ENCODE measurements at regions of chr6 and their contacts with region 1.

Region 1: DNA sequence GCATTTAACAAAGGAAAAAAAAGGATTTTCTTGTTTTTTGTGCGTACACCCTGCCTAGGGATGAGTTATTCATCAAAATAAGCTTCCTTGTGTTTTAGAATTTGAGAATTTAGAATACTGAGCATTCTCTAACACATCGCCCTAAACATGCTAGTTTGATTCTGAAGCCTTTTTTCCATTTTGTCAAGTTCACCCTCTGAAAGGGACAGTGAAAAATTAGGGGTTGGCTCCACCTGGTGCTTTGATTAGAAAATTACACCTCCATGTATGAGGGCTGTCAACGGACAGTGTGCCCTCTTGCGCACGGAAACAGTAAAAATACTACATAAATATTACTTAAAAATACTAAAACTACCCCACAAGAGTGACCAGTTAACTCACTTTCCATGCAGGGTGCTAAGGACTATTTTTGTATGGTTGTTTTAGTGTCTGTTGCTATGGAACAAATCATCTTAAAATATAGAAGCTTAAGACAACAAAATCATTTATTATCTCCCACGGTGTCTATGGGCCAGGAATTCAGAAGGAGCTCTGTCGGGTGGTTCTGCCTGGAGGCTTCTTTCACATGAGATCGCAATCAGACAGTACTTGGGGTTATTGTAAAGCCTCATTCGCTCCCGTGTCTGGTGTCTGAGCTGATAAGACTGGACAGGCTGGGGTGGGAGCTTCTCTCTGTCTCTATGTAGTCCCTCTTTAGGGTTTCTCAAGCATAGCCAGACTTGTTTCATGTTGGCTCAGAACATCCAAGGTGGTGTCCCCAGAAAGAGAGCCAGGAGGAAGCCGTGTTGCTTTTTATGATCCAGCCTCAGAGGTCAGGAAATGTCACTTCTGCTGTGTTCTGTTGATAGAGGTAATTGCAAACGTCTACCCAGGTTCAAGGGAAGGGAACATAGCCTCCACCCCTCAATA is 41.1 kb upstream of the TMEM170B start:
- H3K4me3 Mint-ChIP-seq: no peak overlapping the region
- H3K27ac Mint-ChIP-seq: no peak overlapping the region
- H3K4me1 Mint-ChIP-seq: peaks cover 19% of the 10 kb centered on the region
- H3K27me3 Mint-ChIP-seq: no peaks in the 10 kb centered on the region

Region 2: GRCh38 chr6:10478187-10479040 is 1018.0 kb before region 1 on chr6:
- intact Hi-C with region 1: loop called (anchors 10 kb)
- H3K4me3 Mint-ChIP-seq: no peak overlapping the region
- H3K27ac Mint-ChIP-seq: no peak overlapping the region
- H3K4me1 Mint-ChIP-seq: no peaks in the 10 kb centered on the region
- H3K27me3 Mint-ChIP-seq: peaks cover 7% of the 10 kb centered on the region

Region 3: DNA sequence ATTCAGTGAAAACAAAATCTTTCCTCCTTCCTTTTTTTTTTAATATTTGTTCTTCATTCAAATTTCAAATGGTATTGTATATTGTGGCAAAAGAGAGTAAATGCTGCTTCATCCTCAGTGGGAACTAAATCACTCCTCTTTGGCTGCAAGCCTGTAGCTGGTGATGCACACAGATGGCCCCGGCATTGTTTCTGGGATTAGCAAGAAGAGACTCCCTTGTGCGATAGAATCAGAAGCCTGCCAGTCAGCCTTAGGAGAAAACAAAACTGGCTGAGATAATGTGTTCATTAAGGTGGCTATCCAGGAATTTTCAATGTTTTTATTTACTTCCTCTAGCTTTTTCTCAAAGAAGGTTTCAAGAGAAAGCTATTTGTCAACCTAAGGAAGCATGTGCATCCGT is 431.6 kb before region 1 on chr6:
- intact Hi-C with region 1: no loop called
- H3K4me3 Mint-ChIP-seq: no peak overlapping the region
- H3K27ac Mint-ChIP-seq: no peak overlapping the region
- H3K4me1 Mint-ChIP-seq: no peaks in the 10 kb centered on the region
- H3K27me3 Mint-ChIP-seq: peaks cover 6% of the 10 kb centered on the region

Region 4: GRCh38 chr6:11144393-11144851 is 352.0 kb before region 1 on chr6:
- intact Hi-C with region 1: loop called (anchors 1 kb)
- H3K4me3 Mint-ChIP-seq: no peak overlapping the region
- H3K27ac Mint-ChIP-seq: no peak overlapping the region
- H3K4me1 Mint-ChIP-seq: peaks cover 46% of the 10 kb centered on the region
- H3K27me3 Mint-ChIP-seq: no peaks in the 10 kb centered on the region

Region 5: GRCh38 chr6:11172501-11173332 is 323.7 kb before region 1 on chr6:
- intact Hi-C with region 1: loop called (anchors 1 kb)
- H3K4me3 Mint-ChIP-seq: no peak overlapping the region
- H3K27ac Mint-ChIP-seq: no peak overlapping the region
- H3K4me1 Mint-ChIP-seq: peaks cover 18% of the 10 kb centered on the region
- H3K27me3 Mint-ChIP-seq: peaks cover 6% of the 10 kb centered on the region

Region 6: DNA sequence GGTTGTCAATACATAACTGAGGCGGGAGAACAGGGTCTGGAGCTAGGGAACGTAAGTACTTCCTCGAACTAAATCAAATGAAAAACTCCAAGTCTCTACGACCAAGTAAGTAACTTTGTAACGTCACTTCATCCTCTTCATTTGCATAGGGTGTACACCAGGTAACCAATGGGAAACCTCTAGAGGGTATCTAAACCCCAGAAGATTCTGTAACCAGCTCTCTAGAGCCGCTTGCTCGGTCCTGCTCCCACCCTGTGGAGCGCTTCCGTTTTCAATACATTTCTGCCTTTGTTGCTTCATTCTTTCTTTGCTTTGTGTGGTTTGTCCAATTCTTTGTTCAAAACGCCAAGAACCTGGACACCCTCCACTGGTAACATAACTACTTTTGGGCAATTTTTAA is 92.3 kb before region 1 on chr6:
- intact Hi-C with region 1: no loop called
- H3K4me3 Mint-ChIP-seq: no peak overlapping the region
- H3K27ac Mint-ChIP-seq: no peak overlapping the region
- H3K4me1 Mint-ChIP-seq: peaks cover 37% of the 10 kb centered on the region
- H3K27me3 Mint-ChIP-seq: peaks cover 20% of the 10 kb centered on the region

Region 7: DNA sequence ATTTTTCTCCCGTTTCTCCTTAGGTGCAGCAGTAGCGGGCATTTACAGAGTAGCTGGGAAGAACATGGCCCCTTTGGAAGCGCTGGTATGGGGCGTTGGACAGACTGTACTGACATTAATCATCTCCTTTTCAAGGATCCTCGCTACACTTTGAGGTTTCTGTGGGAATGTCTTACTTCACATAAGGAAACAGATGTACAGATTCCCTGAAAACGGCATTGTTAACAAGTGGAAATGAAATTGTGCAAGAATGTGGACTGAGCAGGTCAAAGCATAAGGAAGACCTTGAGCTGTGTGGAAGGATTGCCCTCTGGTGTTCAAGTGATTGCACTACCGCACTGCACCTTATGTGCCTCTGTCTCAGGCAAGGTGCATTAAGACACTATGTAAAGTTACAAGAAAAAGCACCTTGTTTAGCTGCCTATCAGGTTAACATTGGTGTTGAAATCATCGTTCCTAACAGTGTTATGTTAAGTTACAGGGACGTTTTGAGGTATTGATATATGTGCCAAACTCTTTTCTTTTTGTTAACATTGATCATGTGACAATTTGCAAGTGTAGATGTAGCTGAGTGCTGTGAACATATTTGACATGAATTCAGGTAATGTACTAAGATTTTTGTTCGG is 79.1 kb after region 1 on chr6:
- intact Hi-C with region 1: loop called (anchors 1 kb)
- H3K4me3 Mint-ChIP-seq: peak overlapping the region; percentile 51
- H3K27ac Mint-ChIP-seq: no peak overlapping the region
- H3K4me1 Mint-ChIP-seq: peaks cover 14% of the 10 kb centered on the region
- H3K27me3 Mint-ChIP-seq: no peaks in the 10 kb centered on the region

Measured in dendritic cell treated with granulocyte-macrophage colony-stimulating factor and Interleukin-4, amounts not matched to agents 40 ng/mL and 50 ng/mL, for 4 days (primary cell).